Heart right ventricle (tissue), 16 donors: ENCODE measurements at regions of chr2 and their contacts with region 1.

Region 1: DNA sequence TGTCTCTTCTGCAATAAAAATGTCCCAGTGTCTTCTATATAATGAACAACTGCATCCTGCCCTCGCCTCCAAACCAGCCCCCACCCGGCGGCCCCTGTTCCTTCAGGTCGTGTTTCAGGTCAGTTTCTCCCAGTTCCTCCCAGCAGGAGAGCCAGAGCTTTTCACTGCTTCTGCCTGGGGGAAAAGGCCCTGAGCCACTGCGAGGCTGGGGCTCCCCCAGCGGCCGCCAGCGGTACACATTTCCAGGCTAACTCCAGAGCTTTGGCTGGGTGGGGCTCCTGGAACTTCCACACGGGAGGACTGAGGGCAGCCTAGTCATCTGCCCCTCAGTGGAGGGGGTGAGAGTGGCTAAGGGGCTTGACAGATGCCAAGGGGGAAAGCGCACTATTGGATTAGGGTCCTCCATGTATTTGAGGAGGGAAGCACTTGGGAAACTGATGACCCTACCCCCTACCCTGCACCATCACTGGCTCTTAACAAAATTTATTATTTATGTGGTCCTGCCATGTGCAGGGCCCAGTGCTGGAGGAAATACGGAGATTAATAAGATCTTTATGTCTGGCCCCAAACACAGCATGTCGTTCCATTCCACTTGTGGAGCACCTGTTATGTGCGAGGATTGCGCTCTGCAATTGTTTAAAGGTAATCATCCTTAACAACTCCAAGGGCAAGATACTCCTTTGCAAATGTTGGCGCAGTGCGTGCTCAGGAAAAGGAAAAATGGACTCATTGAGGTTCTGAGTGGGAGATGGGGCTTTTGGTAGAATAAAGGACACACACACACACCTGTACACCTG is 17.3 kb upstream of the CYS1 start:
- DNase-seq: peak; percentile 63 to 69
- ATAC-seq: peak; percentile 89 to 96 (median 94)
- H3K4me3 ChIP-seq: no peak overlapping the region
- H3K27ac ChIP-seq: no peak overlapping the region
- H3K4me1 ChIP-seq: peaks cover 0 to 22% (median 3%) of the 10 kb centered on the region in 9 donors
- H3K27me3 ChIP-seq: peaks cover 0 to 29% (median 16%) of the 10 kb centered on the region in 7 donors
- CTCF ChIP-seq: peak; percentile 90 to 97 (median 92)

Region 2: DNA sequence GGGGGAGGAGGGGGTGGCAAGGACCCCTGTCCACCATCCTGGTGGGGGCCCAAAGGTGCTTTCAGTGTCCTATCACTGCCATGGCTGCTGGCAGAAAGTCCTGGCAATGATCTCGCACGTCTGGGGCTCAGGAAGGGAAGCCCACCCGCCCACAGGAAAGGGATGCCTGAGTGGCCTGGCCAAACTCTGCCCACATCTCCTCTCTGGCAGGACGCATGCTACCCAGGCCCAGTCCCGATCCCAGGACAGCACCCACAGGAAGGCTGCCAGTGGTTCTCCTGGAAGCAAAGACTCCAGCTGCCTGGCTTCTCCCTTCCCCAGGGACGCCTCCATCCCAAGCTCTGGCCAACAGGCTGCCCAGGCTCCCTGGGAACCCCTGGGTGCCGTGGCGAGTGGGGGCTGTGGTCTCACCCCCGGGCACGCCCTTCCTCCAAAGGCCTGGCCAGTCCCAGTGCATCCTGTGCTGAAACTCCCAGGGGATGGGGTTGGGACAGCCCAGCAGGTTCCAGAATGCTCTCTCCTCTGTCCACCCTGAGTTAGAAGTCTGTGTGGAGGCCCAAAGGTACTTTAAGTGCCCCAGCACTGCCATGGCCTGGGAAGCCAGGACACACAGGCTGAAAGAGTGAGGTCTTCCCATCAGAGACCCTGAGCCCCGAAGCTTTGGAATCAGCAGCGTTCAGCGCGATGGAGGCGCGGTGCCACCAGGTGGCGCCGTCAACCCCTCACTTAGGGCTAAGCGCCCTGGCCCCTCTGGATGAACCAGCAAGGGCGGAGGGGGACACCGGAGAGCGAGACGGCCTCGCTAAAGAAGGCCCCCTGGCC is 284.0 kb before region 1 on chr2:
- intact Hi-C with region 1: loop called in 3 of 10 experiments (anchors 2 to 5 kb)
- DNase-seq: peak; percentile 61 to 76
- ATAC-seq: peak; percentile 79 to 92 (median 86)
- H3K4me3 ChIP-seq: peak overlapping the region in 5 of 10 donors; percentile 3 to 29 (median 25)
- H3K27ac ChIP-seq: no peak overlapping the region
- H3K4me1 ChIP-seq: peaks cover 0 to 16% (median 13%) of the 10 kb centered on the region in 9 donors
- H3K27me3 ChIP-seq: peaks cover 0 to 3% (median 0%) of the 10 kb centered on the region in 7 donors
- CTCF ChIP-seq: peak; percentile 80 to 97 (median 94)

Region 3: DNA sequence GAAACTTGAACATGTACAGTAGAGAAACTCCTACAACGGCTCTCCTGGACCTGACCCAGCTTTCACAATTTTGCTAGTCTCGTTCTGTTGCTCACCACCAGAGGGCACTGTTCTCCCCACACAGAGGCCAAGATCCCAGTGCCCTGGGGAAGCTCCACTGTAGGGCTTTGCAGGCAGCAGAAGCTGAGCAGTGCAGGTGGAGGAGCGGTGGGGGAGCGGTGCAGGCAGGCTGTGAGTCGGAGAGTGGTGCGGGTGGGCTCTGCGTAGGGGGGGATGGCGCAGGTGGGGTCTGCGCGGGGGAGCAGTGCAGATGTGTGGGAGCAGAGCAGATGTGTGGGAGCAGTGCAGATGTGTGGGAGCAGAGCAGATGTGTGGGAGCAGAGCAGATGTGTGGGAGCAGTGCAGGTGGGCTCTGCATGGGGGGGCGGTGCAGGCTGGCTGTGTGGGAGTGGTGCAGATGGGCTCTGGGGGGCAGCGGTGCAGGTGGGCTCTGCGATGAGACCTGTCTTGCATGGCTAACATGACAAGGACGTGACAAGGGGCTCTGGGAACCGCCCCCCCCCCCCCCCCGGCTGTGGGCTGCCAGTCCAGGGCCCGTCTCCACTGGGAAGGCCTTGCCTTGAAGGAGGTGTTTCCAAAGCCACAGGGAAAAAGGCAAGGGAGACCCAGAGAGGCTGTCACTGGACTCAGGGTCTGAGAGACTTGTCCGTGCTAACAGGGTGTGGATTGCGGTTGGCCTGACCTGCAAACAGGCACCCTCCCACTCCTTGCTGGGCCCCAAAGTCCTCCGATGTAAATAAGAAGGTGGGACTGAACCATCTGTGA is 24.7 kb before region 1 on chr2:
- intact Hi-C with region 1: loop called in 4 of 10 experiments (anchors 1 to 2 kb)
- DNase-seq: peak; percentile 63 to 85
- ATAC-seq: peak; percentile 87 to 94 (median 92)
- H3K4me3 ChIP-seq: no peak overlapping the region
- H3K27ac ChIP-seq: no peak overlapping the region
- H3K4me1 ChIP-seq: peaks cover 0 to 9% (median 0%) of the 10 kb centered on the region in 9 donors
- H3K27me3 ChIP-seq: peaks cover 0 to 49% (median 0%) of the 10 kb centered on the region in 7 donors
- CTCF ChIP-seq: peak; percentile 80 to 91 (median 86)

Region 4: DNA sequence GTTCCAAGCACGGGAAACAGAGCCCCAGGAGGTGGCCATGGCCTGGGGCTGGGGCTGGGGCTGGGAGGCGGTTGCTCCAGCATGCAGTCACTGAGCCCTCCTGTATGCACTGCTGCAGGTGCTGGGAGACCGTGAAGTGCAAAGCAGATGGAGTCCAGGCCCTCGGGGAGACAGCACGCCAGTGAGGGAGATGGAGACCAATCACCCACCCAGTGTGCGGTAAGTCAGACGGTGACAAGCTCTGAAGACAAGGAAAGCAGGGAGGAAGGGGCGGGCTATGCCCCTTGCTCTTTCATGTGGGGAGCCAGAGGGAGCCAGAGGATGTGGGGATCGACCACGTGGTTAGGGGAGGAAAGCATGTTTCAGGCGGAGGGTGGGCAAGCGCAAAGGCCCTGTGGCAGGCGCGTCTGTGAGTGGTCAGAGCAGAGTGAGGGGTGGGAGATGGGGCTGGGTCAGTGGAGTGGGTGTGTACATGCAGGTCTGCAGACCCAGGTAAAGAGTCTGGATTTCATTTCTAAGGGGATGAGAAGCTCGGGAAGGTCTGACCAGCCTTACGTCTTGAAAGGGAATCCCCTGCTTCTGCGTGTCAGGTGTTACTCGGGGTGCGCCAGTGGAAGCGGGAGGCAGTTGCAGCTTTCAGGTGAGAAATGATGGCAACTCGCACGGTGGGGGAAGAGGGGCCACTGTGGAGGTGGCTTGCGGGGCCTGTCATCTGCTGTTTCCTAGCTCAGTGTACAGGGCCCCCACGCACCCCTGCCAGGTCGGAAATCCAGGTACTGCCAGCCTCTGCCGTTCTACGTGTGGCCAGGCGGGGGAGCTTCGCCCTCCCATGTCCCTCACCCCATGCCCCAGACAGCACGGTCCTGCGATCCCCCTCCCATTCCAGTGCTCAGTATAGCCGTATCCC is 44.4 kb after region 1 on chr2:
- intact Hi-C with region 1: no loop called
- DNase-seq: peak in 1 of 2 donors; percentile 38
- ATAC-seq: peak in 5 of 8 donors; percentile 32 to 59 (median 49)
- H3K4me3 ChIP-seq: no peak overlapping the region
- H3K27ac ChIP-seq: no peak overlapping the region
- H3K4me1 ChIP-seq: peaks cover 0 to 17% (median 9%) of the 10 kb centered on the region in 9 donors
- H3K27me3 ChIP-seq: no peaks in the 10 kb centered on the region
- CTCF ChIP-seq: peak; percentile 24 to 63 (median 56)